Posterior vena cava (tissue), 2 donors: ENCODE measurements at regions of chr1 and their contacts with region 1.

Region 1: GRCh38 chr1:208276757-208277435 is 32.7 kb upstream of the PLXNA2 start:
- DNase-seq: no peak

Region 2: GRCh38 chr1:207762622-207763021 is 514.3 kb before region 1 on chr1:
- intact Hi-C with region 1: no loop called
- DNase-seq: peak; percentile 76

Region 3: DNA sequence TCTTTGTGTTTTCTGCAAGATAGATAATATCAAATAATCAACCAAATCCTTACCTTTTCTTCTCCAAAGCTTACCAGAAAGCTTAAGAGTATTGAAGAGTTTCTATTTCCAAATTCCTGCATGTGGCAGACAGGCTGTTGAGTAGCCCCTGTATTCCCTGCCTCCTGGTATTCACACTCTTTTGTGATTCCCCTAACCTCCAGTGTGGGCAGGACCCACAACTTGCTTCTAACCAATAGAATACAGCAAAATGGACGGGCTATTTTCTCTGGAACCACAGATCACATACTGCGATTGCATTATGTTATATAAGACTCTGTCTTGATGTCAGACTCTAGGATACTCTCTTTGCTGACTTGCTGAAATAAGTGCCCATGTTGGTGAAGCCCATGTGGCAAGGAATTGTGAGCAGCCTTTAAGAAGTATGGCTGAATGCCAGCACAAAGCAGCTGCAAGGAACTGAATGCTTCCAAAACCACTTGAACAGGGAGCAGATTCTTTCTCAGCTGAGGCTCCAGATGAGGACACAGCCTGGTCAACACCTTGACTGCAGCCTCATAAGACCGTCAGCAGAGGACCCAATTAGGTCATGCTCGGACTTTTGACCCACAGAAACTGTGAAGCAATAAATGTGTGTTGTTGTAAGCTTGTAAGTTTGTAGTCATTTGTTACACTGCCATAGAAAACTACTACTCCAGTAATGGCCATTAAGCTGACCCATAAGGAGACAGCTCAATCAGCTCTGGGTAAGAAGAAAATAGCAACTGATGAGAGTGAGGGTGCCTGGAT is 15.2 kb after region 1 on chr1:
- intact Hi-C with region 1: loop called in 1 of 2 experiments (anchors 1 kb)
- DNase-seq: no peak